ENCODE measurements at regions of chr7 and their contacts with region 1.

Region 1: GRCh38 chr7:1432411-1433082 is 26.7 kb downstream of the MICALL2 start:
- DNase-seq: peak in 8 of 10 donors; percentile 46 to 74 (median 66)
- H3K4me3 ChIP-seq: no peak overlapping the region
- H3K27ac ChIP-seq: no peak overlapping the region
- H3K27me3 ChIP-seq: peaks cover 0 to 23% (median 5%) of the 10 kb centered on the region in 45 donors
- CTCF ChIP-seq: peak; percentile 87 to 100 (median 96)

Region 2: DNA sequence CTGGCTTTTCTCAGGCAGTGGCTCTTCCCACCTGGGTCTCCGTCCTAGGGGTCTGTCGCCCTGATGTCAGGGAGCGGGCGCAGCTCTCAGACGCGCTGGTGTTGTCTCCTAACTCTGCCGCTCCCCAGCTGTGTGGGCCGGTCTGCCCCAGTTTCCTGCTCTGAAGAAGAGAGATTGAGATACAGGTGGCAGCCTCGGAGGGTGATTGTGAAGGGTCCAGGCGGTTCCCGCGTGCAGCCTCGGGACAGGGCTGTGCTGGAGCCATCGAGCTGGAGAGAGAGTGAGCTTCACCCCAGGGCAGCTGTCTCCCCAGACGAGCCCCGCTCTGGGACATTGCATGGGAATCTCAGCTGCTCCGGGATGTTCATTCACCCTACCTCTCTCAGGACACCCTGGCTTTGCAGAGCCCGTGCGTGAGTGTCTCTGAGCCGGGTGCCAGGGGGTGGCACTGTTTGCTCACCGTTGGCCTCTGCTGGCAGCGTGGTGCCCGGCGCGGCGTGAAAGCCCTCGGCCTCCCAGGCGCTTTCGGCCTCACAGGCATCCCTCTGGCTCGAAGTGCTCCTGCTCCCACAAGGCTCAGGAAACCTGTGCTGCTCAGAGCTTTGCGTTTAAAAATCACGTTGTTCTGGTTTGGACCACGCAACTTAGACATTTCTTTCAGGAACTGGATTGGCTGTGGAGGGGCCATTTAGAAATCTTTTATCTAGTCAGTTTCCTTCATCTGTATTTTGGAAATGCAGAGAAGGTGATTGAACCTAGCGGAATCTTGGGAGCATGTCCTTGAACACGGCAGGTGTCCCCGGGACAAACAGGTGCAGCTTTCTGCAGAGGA is 238.7 kb before region 1 on chr7:
- intact Hi-C with region 1: loop called (anchors 10 kb)
- DNase-seq: peak; percentile 63 to 92 (median 68)
- H3K4me3 ChIP-seq: no peak overlapping the region
- H3K27ac ChIP-seq: no peak overlapping the region
- H3K27me3 ChIP-seq: peaks cover 0 to 56% (median 19%) of the 10 kb centered on the region in 45 donors
- CTCF ChIP-seq: peak in 55 of 56 donors; percentile 16 to 82 (median 60)

Measured in dorsolateral prefrontal cortex (tissue), 120 donors.